Activated CD4-positive, alpha-beta T cell treated with anti-CD3 and anti-CD28 coated beads for 36 hours (primary cell): ENCODE measurements at regions of chr16 and their contacts with region 1.

Region 1: GRCh38 chr16:30698139-30698815 is 694 bp upstream of the SRCAP start:
- DNase-seq: peak; percentile 100
- ATAC-seq: peak; percentile 75
- H3K4me3 Mint-ChIP-seq: peak overlapping the region; percentile 96
- H3K27ac Mint-ChIP-seq: peak overlapping the region; percentile 99
- H3K4me1 Mint-ChIP-seq: peaks cover 33% of the 10 kb centered on the region
- H3K27me3 Mint-ChIP-seq: no peaks in the 10 kb centered on the region

Region 2: GRCh38 chr16:30065143-30065850 is 633.0 kb before region 1 on chr16 and contains the start of gene ALDOA:
- CTCF ChIA-PET with region 1: no interaction called
- POLR2A ChIA-PET with region 1: no interaction called
- intact Hi-C with region 1: loop called in 1 of 2 experiments (anchors 1 kb)
- DNase-seq: peak; percentile 99
- ATAC-seq: peak; percentile 87
- H3K4me3 Mint-ChIP-seq: peak within 1 kb of the TSS; percentile 88
- H3K27ac Mint-ChIP-seq: peak within 1 kb of the TSS; percentile 99
- H3K4me1 Mint-ChIP-seq: peaks cover 31% of the 10 kb centered on the region
- H3K27me3 Mint-ChIP-seq: no peaks in the 10 kb centered on the region
- total RNA-seq, gene ALDOA: 2,482 to 3,644 TPM

Region 3: GRCh38 chr16:30429678-30430427 is 268.4 kb before region 1 on chr16 and contains the start of gene DCTPP1:
- CTCF ChIA-PET with region 1: interaction called, 10 read pairs
- POLR2A ChIA-PET with region 1: interaction called, 13 read pairs
- intact Hi-C with region 1: no loop called
- DNase-seq: peak; percentile 97
- ATAC-seq: peak; percentile 96
- H3K4me3 Mint-ChIP-seq: no peak within 1 kb of the TSS
- H3K27ac Mint-ChIP-seq: no peak within 1 kb of the TSS
- H3K4me1 Mint-ChIP-seq: peaks cover 31% of the 10 kb centered on the region
- H3K27me3 Mint-ChIP-seq: no peaks in the 10 kb centered on the region
- total RNA-seq, gene DCTPP1: 89.3 to 102 TPM

Region 4: DNA sequence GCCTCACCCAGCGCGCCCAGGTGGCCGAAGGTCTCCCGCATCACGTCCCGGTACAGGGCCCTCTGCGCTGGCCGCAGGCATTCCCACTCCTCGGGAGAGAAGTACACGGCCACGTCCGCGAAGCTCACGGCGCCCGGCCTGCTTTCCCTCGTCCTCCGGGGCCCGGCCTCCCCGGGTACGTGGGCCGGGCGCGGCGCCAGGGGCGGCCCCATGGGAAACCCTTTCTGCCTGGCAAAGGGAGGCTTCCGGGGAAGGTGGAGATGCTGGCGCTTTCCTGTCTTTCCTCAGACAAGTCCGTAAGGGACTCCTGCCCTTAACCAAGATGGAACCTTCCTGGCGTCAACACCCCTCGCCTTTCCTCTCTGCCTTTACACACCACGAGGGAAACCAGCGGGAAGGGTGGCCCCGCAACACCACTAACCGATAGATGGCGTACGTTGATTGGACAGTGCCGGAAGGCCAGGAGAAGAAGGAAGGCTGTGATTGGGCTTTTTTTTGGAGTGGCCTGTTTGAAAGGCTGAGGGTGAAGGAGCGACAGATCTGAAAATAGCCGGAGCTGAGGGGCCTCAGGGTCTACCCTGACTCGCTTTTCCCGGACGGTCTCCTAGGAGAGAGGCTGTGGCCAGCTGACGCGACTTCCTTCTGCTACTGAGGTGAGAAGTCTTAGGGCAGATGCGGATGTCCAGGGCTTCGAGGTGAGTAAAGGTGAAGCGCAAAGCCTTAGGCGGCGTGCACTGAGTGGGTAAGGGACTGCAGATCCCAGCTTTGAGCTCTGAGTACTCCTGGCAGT is 112.7 kb before region 1 on chr16 and contains the start of gene ZNF785:
- CTCF ChIA-PET with region 1: no interaction called
- POLR2A ChIA-PET with region 1: interaction called, 6 read pairs
- intact Hi-C with region 1: loop called in 1 of 2 experiments (anchors 1 kb)
- DNase-seq: peak; percentile 96
- ATAC-seq: peak; percentile 99
- H3K4me3 Mint-ChIP-seq: peak within 1 kb of the TSS; percentile 87
- H3K27ac Mint-ChIP-seq: peak within 1 kb of the TSS; percentile 92
- H3K4me1 Mint-ChIP-seq: peaks cover 37% of the 10 kb centered on the region
- H3K27me3 Mint-ChIP-seq: no peaks in the 10 kb centered on the region
- total RNA-seq, gene ZNF785: 9.2 to 10.8 TPM

Region 5: DNA sequence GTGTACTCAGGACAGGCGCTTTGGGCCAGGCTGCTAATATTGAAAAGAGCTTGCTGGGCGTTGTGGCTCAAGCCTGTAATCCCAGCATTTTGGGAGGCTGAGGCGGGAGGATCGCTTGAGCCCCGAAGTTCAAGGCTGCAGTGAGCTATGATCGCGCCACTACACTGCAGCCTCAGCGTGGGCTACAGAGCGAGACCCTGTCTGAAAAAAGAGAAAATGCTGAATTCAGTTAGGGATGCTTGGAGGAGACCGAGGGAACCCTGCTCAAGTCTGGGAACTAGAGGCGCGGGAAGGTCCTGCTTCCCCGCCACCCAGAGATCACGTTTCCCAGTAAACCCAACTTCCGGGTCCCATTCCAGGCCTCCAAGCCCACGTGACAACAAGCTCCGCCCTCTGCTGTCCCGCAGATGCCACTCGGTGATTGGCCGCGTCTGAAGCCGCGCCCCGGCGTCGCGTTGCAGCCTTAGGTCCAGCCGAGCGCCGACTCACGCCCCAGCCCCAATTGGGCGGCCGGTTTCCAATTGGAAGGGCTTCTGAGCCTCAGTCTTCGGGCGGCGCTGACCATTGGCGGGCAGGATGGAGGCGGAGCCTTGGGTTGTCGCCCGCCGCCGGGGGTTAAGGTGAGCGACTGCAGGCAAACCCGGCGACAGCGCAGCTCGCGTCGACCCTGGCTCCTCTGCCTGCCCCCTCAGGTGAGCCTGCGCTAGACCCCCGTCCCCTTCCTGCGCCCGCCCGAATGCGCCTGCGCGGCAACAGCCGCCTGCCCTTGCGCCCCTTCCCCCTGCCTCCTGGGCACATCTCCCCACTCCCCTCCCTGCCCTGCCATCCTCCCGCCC is 49.7 kb after region 1 on chr16 and contains the start of gene PHKG2:
- CTCF ChIA-PET with region 1: interaction called, 6 read pairs
- POLR2A ChIA-PET with region 1: no interaction called
- intact Hi-C with region 1: loop called in 1 of 2 experiments (anchors 2 kb)
- DNase-seq: peak; percentile 99
- ATAC-seq: peak; percentile 99
- H3K4me3 Mint-ChIP-seq: peak within 1 kb of the TSS; percentile 88
- H3K27ac Mint-ChIP-seq: peak within 1 kb of the TSS; percentile 88
- H3K4me1 Mint-ChIP-seq: peaks cover 21% of the 10 kb centered on the region
- H3K27me3 Mint-ChIP-seq: no peaks in the 10 kb centered on the region
- total RNA-seq, gene PHKG2: 21.8 to 26.0 TPM

Region 6: DNA sequence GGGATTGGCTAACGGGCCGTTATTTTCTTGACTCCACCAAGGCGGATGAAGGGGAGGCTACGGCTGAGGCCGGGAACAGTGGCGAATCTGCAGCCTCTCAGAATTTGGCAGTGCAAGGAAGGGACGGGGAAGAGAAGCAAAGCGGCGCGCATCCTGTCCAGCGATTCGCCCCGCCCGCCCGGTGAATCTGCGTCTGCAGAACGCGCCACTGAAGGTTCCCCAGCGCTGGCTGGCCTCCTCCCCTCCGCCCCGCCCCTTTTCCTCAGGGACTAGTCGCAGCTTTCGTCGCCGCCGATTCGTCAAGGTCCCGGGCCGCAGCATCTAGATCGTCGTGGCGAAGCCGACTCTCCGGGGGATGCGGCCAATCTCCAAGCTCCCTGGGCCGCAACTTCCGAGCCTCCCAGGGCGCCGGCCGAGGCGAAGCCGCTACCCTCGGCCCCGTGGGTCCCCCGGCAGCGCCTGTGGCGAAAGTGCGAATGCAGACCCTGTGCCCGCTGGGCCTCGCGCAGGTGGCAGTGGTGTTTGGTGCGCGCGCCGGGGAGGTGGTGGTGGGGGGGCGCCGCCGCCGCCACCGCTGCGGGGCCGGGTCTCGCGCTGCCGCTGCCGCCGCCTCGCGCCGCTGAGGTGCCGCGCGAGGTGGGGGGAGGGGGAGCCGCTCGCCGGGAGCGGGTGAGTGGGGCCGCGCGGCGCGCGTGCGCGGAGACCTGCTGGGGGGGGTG is 259.3 kb after region 1 on chr16 and contains the start of gene SETD1A:
- CTCF ChIA-PET with region 1: no interaction called
- POLR2A ChIA-PET with region 1: no interaction called
- intact Hi-C with region 1: loop called in 1 of 2 experiments (anchors 1 kb)
- DNase-seq: peak; percentile 99
- ATAC-seq: peak; percentile 89
- H3K4me3 Mint-ChIP-seq: peak within 1 kb of the TSS; percentile 93
- H3K27ac Mint-ChIP-seq: peak within 1 kb of the TSS; percentile 99
- H3K4me1 Mint-ChIP-seq: peaks cover 37% of the 10 kb centered on the region
- H3K27me3 Mint-ChIP-seq: no peaks in the 10 kb centered on the region
- total RNA-seq, gene SETD1A: 18.5 to 21.7 TPM